ENCODE measurements at regions of chr20 and their contacts with region 1.

Region 1: GRCh38 chr20:11274141-11274594 is 600.4 kb upstream of the JAG1 start:
- DNase-seq: peak; percentile 75
- ATAC-seq: peak; percentile 91
- H3K4me3 ChIP-seq: no peak overlapping the region
- H3K27ac ChIP-seq: no peak overlapping the region
- H3K4me1 ChIP-seq: no peaks in the 10 kb centered on the region
- H3K27me3 ChIP-seq: peaks cover 0 to 8% of the 10 kb centered on the region in 2 experiments; a peak in 1 of 5 replicates
- CTCF ChIP-seq: peak; percentile 91
- EP300 ChIP-seq: no peak
- POLR2A ChIP-seq: no peak
- RAD21 ChIP-seq: peak; percentile 83

Region 2: GRCh38 chr20:10316582-10316981 is 957.6 kb before region 1 on chr20:
- CTCF ChIA-PET with region 1: interaction called, 5 read pairs
- POLR2A ChIA-PET with region 1: no interaction called
- in situ Hi-C with region 1: no loop called
- intact Hi-C with region 1: loop called (anchors 1 kb)
- DNase-seq: peak; percentile 78
- ATAC-seq: peak; percentile 95
- H3K4me3 ChIP-seq: no peak overlapping the region
- H3K27ac ChIP-seq: no peak overlapping the region
- H3K4me1 ChIP-seq: peaks cover 24% of the 10 kb centered on the region
- H3K27me3 ChIP-seq: no peaks in the 10 kb centered on the region
- CTCF ChIP-seq: peak; percentile 93
- EP300 ChIP-seq: no peak
- POLR2A ChIP-seq: no peak
- RAD21 ChIP-seq: peak; percentile 95

Region 3: DNA sequence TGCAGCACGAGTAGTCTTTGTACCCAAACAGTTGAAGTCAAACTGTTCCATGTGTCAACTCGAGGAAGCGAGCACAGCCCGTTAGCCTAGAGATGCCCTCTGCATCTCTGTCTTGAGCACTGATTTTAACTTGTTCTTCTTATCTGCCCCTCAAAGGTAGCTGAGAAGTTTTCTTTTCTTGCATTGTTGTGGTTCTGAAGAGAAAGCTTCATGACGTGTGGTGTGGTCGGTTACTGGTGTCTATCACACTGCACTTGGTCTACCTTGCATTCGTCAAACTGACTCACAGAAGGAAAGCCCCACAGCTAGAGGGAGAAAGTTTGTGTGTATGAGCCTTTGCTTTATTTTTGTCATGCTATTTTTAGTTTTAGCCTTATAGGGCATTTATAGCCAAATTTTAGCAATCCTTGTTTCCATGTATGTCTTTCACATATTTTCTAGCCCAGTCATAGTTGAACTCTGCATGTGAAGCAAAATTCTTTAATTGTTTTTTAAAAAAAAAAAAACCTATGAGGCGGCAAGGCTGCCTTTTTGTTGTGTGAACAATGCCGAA is 715.5 kb before region 1 on chr20:
- CTCF ChIA-PET with region 1: interaction called, 14 read pairs
- POLR2A ChIA-PET with region 1: no interaction called
- in situ Hi-C with region 1: loop called (anchors 5 kb)
- intact Hi-C with region 1: loop called (anchors 1 kb)
- DNase-seq: no peak
- ATAC-seq: no peak
- H3K4me3 ChIP-seq: no peak overlapping the region
- H3K27ac ChIP-seq: peak overlapping the region; percentile 4
- H3K4me1 ChIP-seq: peaks cover 73% of the 10 kb centered on the region
- H3K27me3 ChIP-seq: no peaks in the 10 kb centered on the region
- CTCF ChIP-seq: no peak
- EP300 ChIP-seq: no peak
- POLR2A ChIP-seq: no peak
- RAD21 ChIP-seq: no peak

Region 4: GRCh38 chr20:10653599-10654249 is 620.4 kb before region 1 on chr20:
- CTCF ChIA-PET with region 1: no interaction called
- POLR2A ChIA-PET with region 1: no interaction called
- in situ Hi-C with region 1: no loop called
- intact Hi-C with region 1: loop called (anchors 2 kb)
- DNase-seq: no peak
- ATAC-seq: no peak
- H3K4me3 ChIP-seq: no peak overlapping the region
- H3K27ac ChIP-seq: peak overlapping the region; percentile 69
- H3K4me1 ChIP-seq: peaks cover 40% of the 10 kb centered on the region
- H3K27me3 ChIP-seq: no peaks in the 10 kb centered on the region
- CTCF ChIP-seq: no peak
- EP300 ChIP-seq: no peak
- POLR2A ChIP-seq: no peak
- RAD21 ChIP-seq: no peak

Region 5: GRCh38 chr20:11098888-11099287 is 175.3 kb before region 1 on chr20:
- CTCF ChIA-PET with region 1: no interaction called
- POLR2A ChIA-PET with region 1: no interaction called
- in situ Hi-C with region 1: no loop called
- intact Hi-C with region 1: loop called (anchors 10 kb)
- DNase-seq: no peak
- ATAC-seq: peak; percentile 75
- H3K4me3 ChIP-seq: no peak overlapping the region
- H3K27ac ChIP-seq: no peak overlapping the region
- H3K4me1 ChIP-seq: no peaks in the 10 kb centered on the region
- H3K27me3 ChIP-seq: no peaks in the 10 kb centered on the region
- CTCF ChIP-seq: peak; percentile 43; the same call in 1 of the 2 replicates
- EP300 ChIP-seq: no peak
- POLR2A ChIP-seq: no peak
- RAD21 ChIP-seq: no peak

Region 6: GRCh38 chr20:11261533-11262000 is 12.6 kb before region 1 on chr20:
- CTCF ChIA-PET with region 1: no interaction called
- POLR2A ChIA-PET with region 1: no interaction called
- in situ Hi-C with region 1: no loop called
- intact Hi-C with region 1: no loop called
- DNase-seq: no peak
- ATAC-seq: peak; percentile 60
- H3K4me3 ChIP-seq: no peak overlapping the region
- H3K27ac ChIP-seq: no peak overlapping the region
- H3K4me1 ChIP-seq: no peaks in the 10 kb centered on the region; the same call in 1 of the 2 replicates
- H3K27me3 ChIP-seq: no peaks in the 10 kb centered on the region
- CTCF ChIP-seq: no peak
- EP300 ChIP-seq: no peak
- POLR2A ChIP-seq: no peak
- RAD21 ChIP-seq: no peak

Region 7: DNA sequence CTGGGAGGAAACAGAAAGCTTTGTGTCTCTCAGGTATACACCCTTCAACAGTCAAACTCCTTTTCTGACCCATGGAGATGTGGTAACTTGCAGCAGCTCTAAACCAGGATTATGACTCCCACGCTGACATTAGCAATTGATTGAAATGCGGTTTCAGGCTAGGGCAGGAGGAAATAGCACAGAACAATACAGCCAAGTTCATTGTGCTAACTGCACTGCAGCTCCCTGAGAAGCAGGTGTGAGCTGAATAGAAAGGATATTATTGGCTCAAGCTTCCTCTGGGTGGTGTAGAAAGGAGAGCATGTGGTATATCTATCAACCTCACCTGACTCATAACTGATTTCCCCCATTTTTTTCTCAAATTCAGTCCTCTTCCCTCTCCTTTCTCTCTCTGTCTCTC is 31.2 kb after region 1 on chr20:
- CTCF ChIA-PET with region 1: no interaction called
- POLR2A ChIA-PET with region 1: no interaction called
- in situ Hi-C with region 1: no loop called
- intact Hi-C with region 1: no loop called
- DNase-seq: no peak
- ATAC-seq: no peak
- H3K4me3 ChIP-seq: no peak overlapping the region
- H3K27ac ChIP-seq: no peak overlapping the region
- H3K4me1 ChIP-seq: no peaks in the 10 kb centered on the region
- H3K27me3 ChIP-seq: peaks cover 0 to 5% of the 10 kb centered on the region in 2 experiments; a peak in 3 of 5 replicates
- CTCF ChIP-seq: no peak
- EP300 ChIP-seq: no peak
- POLR2A ChIP-seq: no peak
- RAD21 ChIP-seq: no peak